Ascending aorta (tissue), 2 donors: ENCODE measurements at regions of chr3 and their contacts with region 1.

Region 1: GRCh38 chr3:28726840-28727239 is 378.2 kb upstream of the AZI2 start:
- DNase-seq: peak in 1 of 2 donors; percentile 71
- H3K4me3 ChIP-seq: no peak overlapping the region
- H3K27ac ChIP-seq: peak overlapping the region; percentile 6 to 41
- H3K4me1 ChIP-seq: peaks cover 0 to 4% of the 10 kb centered on the region in 2 donors
- H3K27me3 ChIP-seq: no peaks in the 10 kb centered on the region
- CTCF ChIP-seq: peak; percentile 7 to 48 (median 31)

Region 2: GRCh38 chr3:28476194-28476593 is 250.6 kb before region 1 on chr3:
- intact Hi-C with region 1: loop called (anchors 2 kb)
- DNase-seq: no peak
- H3K4me3 ChIP-seq: no peak overlapping the region
- H3K27ac ChIP-seq: no peak overlapping the region
- H3K4me1 ChIP-seq: no peaks in the 10 kb centered on the region
- H3K27me3 ChIP-seq: no peaks in the 10 kb centered on the region
- CTCF ChIP-seq: peak; percentile 25 to 68 (median 64)

Region 3: GRCh38 chr3:28575746-28576613 is 150.9 kb before region 1 on chr3:
- intact Hi-C with region 1: loop called (anchors 10 kb)
- DNase-seq: peak in 1 of 2 donors; percentile 66
- H3K4me3 ChIP-seq: peak overlapping the region; percentile 52 to 80
- H3K27ac ChIP-seq: peak overlapping the region; percentile 74 to 78
- H3K4me1 ChIP-seq: peaks cover 0 to 4% of the 10 kb centered on the region in 2 donors
- H3K27me3 ChIP-seq: no peaks in the 10 kb centered on the region
- CTCF ChIP-seq: no peak

Region 4: GRCh38 chr3:28682121-28682520 is 44.7 kb before region 1 on chr3:
- intact Hi-C with region 1: no loop called
- DNase-seq: no peak
- H3K4me3 ChIP-seq: no peak overlapping the region
- H3K27ac ChIP-seq: no peak overlapping the region
- H3K4me1 ChIP-seq: peaks cover 0 to 4% of the 10 kb centered on the region in 2 donors
- H3K27me3 ChIP-seq: no peaks in the 10 kb centered on the region
- CTCF ChIP-seq: no peak

Region 5: GRCh38 chr3:29486096-29486495 is 759.3 kb after region 1 on chr3:
- intact Hi-C with region 1: no loop called
- DNase-seq: no peak
- H3K4me3 ChIP-seq: no peak overlapping the region
- H3K27ac ChIP-seq: peak overlapping the region in 1 of 2 donors; percentile 8
- H3K4me1 ChIP-seq: peaks cover 0 to 4% of the 10 kb centered on the region in 2 donors
- H3K27me3 ChIP-seq: no peaks in the 10 kb centered on the region
- CTCF ChIP-seq: no peak